A673 (cell line): ENCODE measurements at regions of chr3 and their contacts with region 1.

Region 1: DNA sequence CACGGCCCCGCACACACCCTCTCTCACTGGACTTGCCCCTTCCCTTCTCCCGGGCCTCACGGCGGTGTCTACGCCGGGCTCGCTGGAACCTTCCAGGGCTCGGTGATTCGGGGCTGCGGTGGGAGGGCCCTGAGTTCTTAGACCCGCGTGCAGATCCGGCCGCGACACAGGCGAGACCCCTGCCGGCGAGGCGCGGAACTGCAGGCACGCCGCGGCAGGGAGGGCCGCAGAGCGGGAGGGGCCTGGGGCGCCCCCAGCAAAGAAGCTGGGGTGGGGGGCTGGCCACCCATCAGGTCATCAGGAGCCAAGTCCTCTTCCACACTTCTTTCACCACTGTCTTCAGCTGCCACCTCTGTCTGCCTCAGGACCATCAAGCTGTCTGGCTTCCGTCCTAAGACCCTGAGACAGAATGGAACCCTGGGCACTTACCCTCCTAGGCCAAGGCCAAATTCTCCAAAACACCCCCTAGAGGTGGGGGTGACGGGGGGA is 164.5 kb downstream of the XXYLT1 start:
- DNase-seq: peak; percentile 78
- H3K4me3 ChIP-seq: no peak overlapping the region
- H3K27ac ChIP-seq: no peak overlapping the region
- H3K4me1 ChIP-seq: peaks cover 49% of the 10 kb centered on the region
- H3K27me3 ChIP-seq: no peaks in the 10 kb centered on the region
- CTCF ChIP-seq: peak; percentile 98

Region 2: GRCh38 chr3:194871143-194871863 is 235.2 kb before region 1 on chr3:
- CTCF ChIA-PET with region 1: no interaction called
- POLR2A ChIA-PET with region 1: no interaction called
- intact Hi-C with region 1: loop called (anchors 10 kb)
- DNase-seq: peak; percentile 94
- H3K4me3 ChIP-seq: no peak overlapping the region
- H3K27ac ChIP-seq: peak overlapping the region; percentile 16
- H3K4me1 ChIP-seq: peaks cover 33% of the 10 kb centered on the region
- H3K27me3 ChIP-seq: no peaks in the 10 kb centered on the region
- CTCF ChIP-seq: 0 out of 2 replicates have a peak, but pooled peaks have one; percentile 25

Region 3: DNA sequence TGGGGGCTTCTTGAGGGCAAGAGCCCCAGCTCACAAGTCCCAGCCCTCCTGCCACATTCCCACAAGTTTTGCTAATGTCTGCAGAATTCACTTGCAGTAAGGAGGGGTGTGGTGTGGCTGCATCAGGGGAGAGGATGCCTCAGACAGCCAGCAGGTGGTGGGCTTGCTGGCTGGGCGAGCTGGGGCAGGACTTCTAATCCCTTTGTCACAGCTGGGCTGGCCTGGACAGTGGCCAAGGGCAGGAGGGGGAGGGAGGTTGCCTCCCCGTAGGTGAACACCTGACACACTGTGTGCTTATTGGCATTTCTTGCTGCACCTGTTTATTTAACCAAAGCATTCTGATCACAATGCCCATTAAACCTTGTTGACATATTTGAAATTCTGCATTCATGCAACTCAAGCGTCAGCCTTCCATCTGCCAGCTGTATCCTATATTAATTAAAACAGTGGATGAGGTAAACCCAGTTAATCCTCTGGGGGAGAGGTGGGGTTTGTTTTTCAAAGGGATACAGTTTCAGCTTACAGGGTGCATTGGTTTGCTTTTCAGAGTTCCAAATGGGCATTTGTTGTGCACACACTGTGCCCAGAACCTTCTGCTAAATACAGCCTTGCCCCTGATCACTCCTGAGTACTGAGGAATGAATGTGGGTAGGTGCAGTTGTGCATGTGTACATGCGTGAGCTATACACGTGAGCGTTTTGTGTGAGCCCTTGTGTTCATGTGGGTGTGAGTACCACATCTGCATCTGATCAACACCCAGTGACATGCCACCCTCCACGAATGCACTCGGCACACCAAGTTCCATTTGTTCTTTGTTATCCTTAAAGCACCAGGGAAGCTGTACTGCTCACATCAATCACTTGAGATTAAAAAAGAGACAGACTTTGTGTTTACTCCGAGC is 104.3 kb before region 1 on chr3:
- CTCF ChIA-PET with region 1: no interaction called
- POLR2A ChIA-PET with region 1: no interaction called
- intact Hi-C with region 1: loop called (anchors 5 kb)
- DNase-seq: peak; percentile 89
- H3K4me3 ChIP-seq: peak overlapping the region; percentile 18
- H3K27ac ChIP-seq: peak overlapping the region; percentile 96
- H3K4me1 ChIP-seq: peaks cover 47% of the 10 kb centered on the region
- H3K27me3 ChIP-seq: no peaks in the 10 kb centered on the region
- CTCF ChIP-seq: peak; percentile 88

Region 4: DNA sequence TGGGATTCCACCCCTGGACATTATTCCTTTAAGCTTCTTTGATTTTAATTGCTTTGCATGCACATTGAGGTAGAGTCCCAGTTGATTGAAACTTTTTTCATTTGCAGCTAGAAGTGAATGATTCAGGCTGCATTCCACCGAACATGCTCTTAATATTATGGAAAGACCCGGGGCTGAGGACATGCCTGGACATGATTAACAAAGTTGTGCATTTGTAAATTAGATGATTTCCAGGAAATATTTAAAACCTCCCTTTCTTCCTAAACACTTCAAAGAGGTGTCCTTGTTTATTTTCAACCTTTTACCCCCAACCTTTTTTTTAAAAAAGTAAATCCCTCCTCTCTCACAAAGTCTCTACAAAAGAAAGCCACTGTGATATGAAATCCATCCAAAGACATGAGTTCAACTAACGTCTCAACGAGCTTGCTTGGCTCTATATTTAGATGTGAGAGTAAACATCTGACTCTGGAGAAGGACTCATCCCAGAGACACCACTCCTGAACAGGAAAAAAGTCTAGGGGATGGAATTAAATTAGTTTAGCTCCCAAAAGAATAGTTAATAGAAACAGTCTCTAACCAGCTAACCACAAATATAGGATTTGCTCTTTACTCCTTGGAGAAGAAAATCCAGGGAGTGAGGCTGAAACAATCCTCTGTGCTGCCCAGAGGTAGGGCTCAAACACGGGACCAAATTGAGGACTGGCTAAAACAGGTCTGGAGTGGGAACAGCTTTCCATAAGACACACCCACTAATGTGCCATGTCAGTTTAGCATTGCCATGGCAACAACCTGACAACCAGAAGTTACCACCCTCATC is 81.4 kb after region 1 on chr3:
- CTCF ChIA-PET with region 1: no interaction called
- POLR2A ChIA-PET with region 1: no interaction called
- intact Hi-C with region 1: loop called (anchors 5 kb)
- DNase-seq: peak; percentile 54
- H3K4me3 ChIP-seq: no peak overlapping the region
- H3K27ac ChIP-seq: peak overlapping the region; percentile 83
- H3K4me1 ChIP-seq: peaks cover 67% of the 10 kb centered on the region
- H3K27me3 ChIP-seq: no peaks in the 10 kb centered on the region
- CTCF ChIP-seq: no peak

Region 5: DNA sequence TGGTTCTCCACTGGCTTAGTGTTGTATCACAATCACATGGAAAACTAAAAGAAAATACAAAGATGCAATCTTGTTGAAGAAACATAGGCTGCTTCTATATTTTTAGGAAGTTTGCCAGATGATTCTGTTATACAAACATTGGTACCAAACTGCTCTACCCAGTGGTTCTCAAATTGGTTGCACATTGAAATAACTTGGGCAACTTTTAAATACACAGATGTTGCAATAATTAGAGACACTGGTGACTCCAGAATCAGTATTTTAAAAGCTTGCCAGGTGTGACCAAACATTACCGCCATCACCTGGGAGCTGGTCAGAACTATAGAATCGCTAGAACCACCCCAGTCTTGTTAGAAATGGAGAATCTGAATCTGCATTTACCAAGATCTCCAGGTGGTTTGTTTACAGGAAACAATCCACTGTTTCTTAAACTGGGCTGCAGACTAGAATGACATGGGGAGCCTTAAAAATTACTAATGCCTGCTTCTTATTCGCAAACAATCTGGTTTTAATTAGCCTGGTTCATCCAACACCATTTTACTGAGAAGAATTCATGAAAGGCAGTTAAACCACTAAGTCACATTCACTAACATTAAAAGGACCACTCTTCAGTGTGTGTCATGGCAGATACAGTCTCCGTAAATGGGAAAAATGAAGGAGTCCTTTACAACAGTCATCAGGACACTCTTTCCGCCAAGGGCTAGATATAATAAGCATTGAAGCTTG is 259.9 kb after region 1 on chr3:
- CTCF ChIA-PET with region 1: no interaction called
- POLR2A ChIA-PET with region 1: no interaction called
- intact Hi-C with region 1: no loop called
- DNase-seq: no peak
- H3K4me3 ChIP-seq: no peak overlapping the region
- H3K27ac ChIP-seq: no peak overlapping the region
- H3K4me1 ChIP-seq: no peaks in the 10 kb centered on the region
- H3K27me3 ChIP-seq: no peaks in the 10 kb centered on the region
- CTCF ChIP-seq: no peak